ENCODE measurements at regions of chr12 and their contacts with region 1.

Region 1: GRCh38 chr12:5335069-5335468 is 96.8 kb upstream of the NTF3 start:
- DNase-seq: no peak
- ATAC-seq: no peak
- H3K4me3 ChIP-seq: no peak overlapping the region
- H3K27ac ChIP-seq: no peak overlapping the region
- H3K4me1 ChIP-seq: peaks cover 6% of the 10 kb centered on the region
- H3K27me3 ChIP-seq: no peaks in the 10 kb centered on the region
- CTCF ChIP-seq: no peak

Region 2: DNA sequence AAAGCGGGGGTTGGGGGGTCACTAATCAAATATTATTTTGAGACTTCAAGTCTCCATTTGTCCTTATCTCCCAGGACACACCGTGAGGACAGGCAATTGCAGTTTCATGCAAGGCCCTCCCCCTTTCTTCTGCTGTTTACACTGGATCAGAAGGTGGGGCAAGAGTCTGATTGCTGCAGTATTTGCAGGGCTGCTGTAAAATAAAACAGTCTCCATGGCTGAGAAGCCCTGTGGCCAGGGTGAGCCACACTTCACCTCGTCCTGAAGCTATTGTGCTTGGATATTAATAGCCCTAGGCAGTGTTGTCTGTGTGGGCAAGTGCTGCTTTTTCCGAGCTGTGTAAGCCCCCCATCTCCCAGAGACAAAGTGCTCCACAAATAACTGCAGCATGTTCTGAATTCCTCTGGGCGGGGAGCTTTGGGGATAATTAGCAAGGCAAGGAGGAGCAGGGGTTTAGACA is 90.5 kb before region 1 on chr12:
- intact Hi-C with region 1: loop called in 1 of 2 experiments (anchors 10 kb)
- DNase-seq: no peak
- ATAC-seq: no peak
- H3K4me3 ChIP-seq: no peak overlapping the region
- H3K27ac ChIP-seq: no peak overlapping the region
- H3K4me1 ChIP-seq: no peaks in the 10 kb centered on the region
- H3K27me3 ChIP-seq: no peaks in the 10 kb centered on the region
- CTCF ChIP-seq: no peak

Region 3: DNA sequence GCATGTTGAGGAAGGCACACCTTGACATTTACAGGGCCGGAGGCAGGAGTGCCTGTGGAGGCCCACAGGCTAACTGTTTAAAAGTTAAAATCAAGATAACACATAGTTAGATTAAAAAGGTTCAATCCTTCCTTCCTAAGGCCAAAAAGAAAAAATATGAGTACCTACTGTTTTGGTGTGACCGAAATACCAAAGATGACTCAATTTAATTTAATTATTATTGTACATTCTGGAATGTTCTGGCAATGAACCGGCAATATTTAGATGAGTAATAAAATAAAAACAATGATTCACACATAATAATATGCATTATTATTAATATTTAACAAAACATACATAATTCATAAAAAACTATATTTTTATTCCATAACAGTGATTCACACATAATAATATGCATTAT is 39.9 kb before region 1 on chr12:
- intact Hi-C with region 1: no loop called
- DNase-seq: no peak
- ATAC-seq: no peak
- H3K4me3 ChIP-seq: no peak overlapping the region
- H3K27ac ChIP-seq: no peak overlapping the region
- H3K4me1 ChIP-seq: no peaks in the 10 kb centered on the region
- H3K27me3 ChIP-seq: peaks cover 0 to 2% (median 0%) of the 10 kb centered on the region in 3 donors
- CTCF ChIP-seq: no peak

Region 4: DNA sequence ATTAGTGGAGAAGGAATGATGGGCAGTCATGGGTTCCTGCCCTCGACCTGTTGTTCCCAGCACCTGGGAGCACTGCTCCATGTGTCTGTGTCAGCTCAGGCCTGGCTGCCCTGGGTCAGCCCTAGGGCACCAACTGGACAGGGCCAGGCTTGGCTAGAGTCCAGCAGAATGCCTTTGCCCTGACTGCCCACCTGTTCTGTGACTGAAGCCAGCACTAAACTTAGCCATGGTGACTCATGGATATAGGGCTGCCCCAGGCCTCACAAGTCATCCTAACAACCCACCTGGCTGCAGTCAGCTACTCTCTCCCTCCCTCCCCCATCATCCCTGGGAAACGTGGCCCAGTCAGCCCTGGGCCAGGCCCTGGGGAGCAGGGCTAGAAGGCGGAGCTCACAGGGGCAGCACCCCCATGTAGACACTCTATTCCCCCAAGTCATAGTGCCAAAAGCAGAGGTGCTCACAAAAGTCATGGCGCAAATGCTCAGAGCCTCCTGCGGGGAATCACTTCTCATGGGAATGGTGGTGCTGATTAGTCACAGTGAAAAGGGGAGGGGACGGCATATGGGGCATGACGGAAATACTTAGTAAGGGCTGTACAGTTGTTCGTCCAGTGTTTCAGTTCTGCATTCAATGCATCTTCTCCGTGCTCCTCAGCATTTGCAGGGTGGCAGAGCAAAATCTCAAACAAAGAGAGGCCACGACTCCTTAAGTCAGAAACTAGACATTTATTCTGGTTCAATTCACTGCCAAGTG is 44.9 kb after region 1 on chr12:
- intact Hi-C with region 1: loop called (anchors 2 to 5 kb)
- DNase-seq: peak; percentile 77 to 91
- ATAC-seq: peak; percentile 97 to 99 (median 98)
- H3K4me3 ChIP-seq: no peak overlapping the region
- H3K27ac ChIP-seq: peak overlapping the region; percentile 78
- H3K4me1 ChIP-seq: peaks cover 12% of the 10 kb centered on the region
- H3K27me3 ChIP-seq: no peaks in the 10 kb centered on the region
- CTCF ChIP-seq: no peak

Region 5: DNA sequence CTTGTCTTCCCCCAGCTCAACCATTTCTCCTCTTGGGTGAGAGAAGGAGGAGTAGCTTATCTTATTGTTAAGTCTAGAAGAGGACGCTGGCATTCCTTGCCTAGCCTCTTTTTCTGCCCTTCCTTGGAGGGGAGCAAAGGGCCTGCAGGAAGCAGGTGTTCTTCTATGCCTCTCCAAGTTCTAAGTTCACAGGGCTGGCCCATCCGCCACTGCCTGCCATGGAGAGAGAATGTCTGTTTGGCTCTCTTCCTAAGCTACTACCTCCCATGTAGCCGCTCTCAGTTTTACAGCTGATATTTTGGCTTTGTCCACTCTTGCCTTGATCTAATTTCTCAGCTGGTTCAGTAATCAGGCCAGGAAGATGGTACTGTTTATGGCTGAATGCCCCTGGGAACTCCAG is 298.0 kb after region 1 on chr12:
- intact Hi-C with region 1: no loop called
- DNase-seq: no peak
- ATAC-seq: no peak
- H3K4me3 ChIP-seq: no peak overlapping the region
- H3K27ac ChIP-seq: no peak overlapping the region
- H3K4me1 ChIP-seq: no peaks in the 10 kb centered on the region
- H3K27me3 ChIP-seq: peaks cover 0 to 12% (median 7%) of the 10 kb centered on the region in 3 donors
- CTCF ChIP-seq: no peak